AG04450 (cell line): ENCODE measurements at regions of chr7 and their contacts with region 1.

Region 1: GRCh38 chr7:39732837-39733804 is 109.7 kb downstream of the RALA start:
- DNase-seq: peak; percentile 94
- H3K4me3 ChIP-seq: peak overlapping the region; percentile 68
- H3K27ac ChIP-seq: peak overlapping the region; percentile 100
- H3K27me3 ChIP-seq: no peaks in the 10 kb centered on the region
- CTCF ChIP-seq: no peak

Region 2: GRCh38 chr7:39623018-39623731 is 109.9 kb before region 1 on chr7 and contains the start of gene RALA:
- CTCF ChIA-PET with region 1: no interaction called
- POLR2A ChIA-PET with region 1: interaction called, 19 read pairs
- DNase-seq: peak; percentile 85
- H3K4me3 ChIP-seq: peak within 1 kb of the TSS; percentile 76
- H3K27ac ChIP-seq: peak within 1 kb of the TSS; percentile 97
- H3K27me3 ChIP-seq: no peaks in the 10 kb centered on the region
- CTCF ChIP-seq: no peak
- polyA plus RNA-seq, gene RALA: 45.0 and 59.2 TPM in 2 replicates

Region 3: DNA sequence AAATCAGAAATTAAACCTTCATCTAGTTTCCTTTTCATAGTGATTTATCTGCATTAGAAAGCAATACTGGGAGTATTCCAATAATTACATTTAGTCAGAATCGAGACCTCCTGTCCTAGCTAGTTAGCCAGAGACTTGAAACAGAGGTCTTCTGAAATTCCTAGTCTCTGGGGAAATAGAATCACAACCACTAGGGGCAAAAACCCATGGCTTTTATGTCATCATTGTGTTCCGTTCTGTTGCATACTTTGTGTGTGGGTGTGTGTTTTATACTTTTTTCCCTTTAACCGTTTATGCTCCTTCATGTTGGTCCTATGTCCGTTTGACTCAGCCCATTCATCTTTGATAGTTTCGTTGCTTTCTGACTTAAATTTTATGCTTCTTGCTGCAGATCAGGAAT is 30.0 kb before region 1 on chr7:
- CTCF ChIA-PET with region 1: no interaction called
- POLR2A ChIA-PET with region 1: no interaction called
- DNase-seq: no peak
- H3K4me3 ChIP-seq: no peak overlapping the region
- H3K27ac ChIP-seq: no peak overlapping the region
- H3K27me3 ChIP-seq: no peaks in the 10 kb centered on the region
- CTCF ChIP-seq: peak; percentile 53

Region 4: DNA sequence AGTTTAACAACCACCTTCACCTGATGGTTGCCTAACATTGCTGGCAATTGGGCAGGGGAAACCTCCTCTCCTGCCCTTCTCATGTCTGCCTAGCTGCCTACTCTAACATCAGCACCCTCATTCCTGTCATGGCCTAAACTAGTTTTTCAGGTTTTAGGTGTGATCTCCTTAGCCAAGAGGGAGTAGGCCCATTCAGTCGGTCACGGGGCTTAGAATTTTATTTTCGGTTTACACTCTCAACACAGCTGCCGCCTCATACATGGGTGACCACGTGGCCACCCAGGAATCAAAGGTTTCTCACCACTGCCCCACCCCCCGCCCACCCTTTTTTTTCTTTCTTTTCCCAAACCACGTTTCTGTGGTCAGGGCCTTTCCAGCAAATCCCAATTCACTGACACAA is 12.5 kb before region 1 on chr7:
- CTCF ChIA-PET with region 1: no interaction called
- POLR2A ChIA-PET with region 1: no interaction called
- DNase-seq: no peak
- H3K4me3 ChIP-seq: no peak overlapping the region
- H3K27ac ChIP-seq: no peak overlapping the region
- H3K27me3 ChIP-seq: no peaks in the 10 kb centered on the region
- CTCF ChIP-seq: no peak

Region 5: GRCh38 chr7:39746103-39746819 is 13.1 kb after region 1 on chr7:
- CTCF ChIA-PET with region 1: interaction called, 52 read pairs
- POLR2A ChIA-PET with region 1: interaction called, 4 read pairs
- DNase-seq: peak; percentile 67
- H3K4me3 ChIP-seq: no peak overlapping the region
- H3K27ac ChIP-seq: no peak overlapping the region
- H3K27me3 ChIP-seq: no peaks in the 10 kb centered on the region
- CTCF ChIP-seq: peak; percentile 87